Activated T-helper 1 cell treated with anti-CD3 and anti-CD28 coated beads, Interleukin-12 subunit alpha, Interleukin-12 subunit beta, Interleukin-2, Interleukin-4 antibody, amounts not matched to agents 30 ng/mL and 10 ng/mL and 1 ng/mL, durations not matched to agents 14 hours and 24 hours and 36 hours (primary cell): ENCODE measurements at regions of chr1 and their contacts with region 1.

Region 1: DNA sequence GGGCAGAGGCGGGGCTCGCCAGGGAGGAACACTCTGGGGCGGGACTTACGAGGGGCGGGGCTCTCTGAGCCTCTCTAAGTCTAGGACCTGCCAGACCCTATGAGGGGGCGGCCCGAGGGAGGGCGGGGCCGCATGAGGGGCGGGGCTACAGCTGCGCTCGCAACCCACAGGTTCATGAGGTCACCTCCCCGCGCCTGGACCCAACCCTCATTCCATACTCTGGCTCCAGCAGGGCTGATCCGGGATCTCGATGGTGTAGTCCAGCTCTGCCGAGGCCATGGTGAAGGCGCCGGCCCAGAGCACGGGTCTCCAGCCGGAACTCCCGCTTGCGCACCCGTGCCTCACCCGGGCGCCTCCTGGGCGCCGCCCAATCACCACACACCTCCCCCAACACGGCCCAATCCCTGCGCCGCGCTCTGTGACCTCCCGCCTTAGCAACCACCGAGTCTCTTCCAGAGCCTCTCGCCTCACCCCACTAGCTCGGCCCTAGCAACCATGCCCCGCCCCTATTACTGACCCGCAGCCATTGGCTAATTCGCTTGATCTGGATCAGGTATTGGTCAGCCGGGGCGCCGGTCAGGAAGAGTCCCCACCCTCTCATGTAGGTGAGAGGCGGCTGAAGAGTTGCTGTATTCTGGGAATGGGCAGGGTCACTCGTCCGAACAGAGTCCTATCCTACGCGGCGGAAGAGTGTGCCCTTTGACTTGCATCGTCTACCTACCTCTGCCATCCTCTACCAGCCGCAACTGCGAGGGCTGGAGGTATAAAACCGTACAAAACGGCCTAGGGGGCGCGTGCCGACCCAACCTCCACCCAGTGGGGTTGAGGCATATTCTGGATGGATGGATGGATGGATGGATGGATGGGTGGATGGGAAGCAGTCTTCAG is at the starts of genes ARMH1 and TMEM53:
- DNase-seq: peak; percentile 98
- H3K4me3 Mint-ChIP-seq: peak within 1 kb of the TSS; percentile 80
- H3K27ac Mint-ChIP-seq: peak within 1 kb of the TSS; percentile 79
- H3K4me1 Mint-ChIP-seq: peaks cover 30% of the 10 kb centered on the region
- H3K27me3 Mint-ChIP-seq: no peaks in the 10 kb centered on the region
- total RNA-seq, gene ARMH1: 95.3 and 99.8 TPM in 2 replicates
- total RNA-seq, gene TMEM53: 4.3 and 6.6 TPM in 2 replicates

Region 2: GRCh38 chr1:44029906-44030604 is 644.3 kb before region 1 on chr1:
- intact Hi-C with region 1: loop called (anchors 1 kb)
- DNase-seq: peak; percentile 86
- H3K4me3 Mint-ChIP-seq: peak overlapping the region; percentile 90
- H3K27ac Mint-ChIP-seq: peak overlapping the region; percentile 92
- H3K4me1 Mint-ChIP-seq: peaks cover 30% of the 10 kb centered on the region
- H3K27me3 Mint-ChIP-seq: peaks cover 2% of the 10 kb centered on the region

Region 3: DNA sequence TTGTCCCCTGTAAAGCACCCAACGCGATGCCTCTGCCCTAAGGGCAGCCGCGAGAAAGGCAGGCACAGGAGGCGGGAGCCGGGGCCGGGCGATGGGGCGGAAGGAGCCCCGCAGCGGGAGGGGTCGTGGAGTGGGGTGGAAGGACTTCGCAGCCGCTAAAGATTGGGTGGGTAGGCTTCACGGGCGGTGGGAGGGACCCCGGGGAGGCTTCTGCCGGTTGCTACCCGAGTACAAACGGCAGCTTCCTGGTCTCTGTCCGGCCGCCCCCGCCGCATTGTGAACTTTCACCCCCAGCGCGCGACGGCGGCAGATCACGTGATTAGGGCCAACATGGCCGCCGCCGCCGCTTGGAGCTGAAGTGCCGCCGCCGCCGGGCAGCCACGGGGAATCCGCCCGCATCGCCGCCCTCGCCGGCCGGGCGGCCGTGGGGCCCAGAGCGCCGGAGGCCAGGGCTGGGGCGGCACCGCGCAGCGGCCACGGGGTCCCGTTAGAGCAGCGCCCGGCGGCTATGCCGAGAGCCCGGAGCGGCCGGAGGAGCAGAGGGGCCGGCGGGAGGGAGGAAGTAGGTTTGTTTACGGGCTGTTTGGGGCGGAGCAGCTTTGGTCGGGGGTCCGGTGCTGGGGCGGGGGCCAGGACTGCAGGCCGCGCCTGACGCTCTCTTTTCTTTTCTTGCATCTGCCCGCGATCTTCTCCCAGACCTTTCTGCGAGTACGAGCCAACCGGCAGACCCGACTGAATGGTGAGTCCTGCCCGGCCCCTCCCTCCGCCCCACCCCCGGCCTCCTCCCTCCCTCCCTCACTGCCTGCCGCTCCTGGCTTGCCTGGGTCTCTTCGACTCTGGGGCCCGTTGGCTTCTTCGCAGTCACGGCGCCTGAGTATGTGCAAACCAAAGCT is 42.5 kb before region 1 on chr1:
- intact Hi-C with region 1: loop called (anchors 1 kb)
- DNase-seq: peak; percentile 86
- H3K4me3 Mint-ChIP-seq: peak overlapping the region; percentile 91
- H3K27ac Mint-ChIP-seq: peak overlapping the region; percentile 97
- H3K4me1 Mint-ChIP-seq: peaks cover 40% of the 10 kb centered on the region
- H3K27me3 Mint-ChIP-seq: peaks cover 2% of the 10 kb centered on the region

Region 4: GRCh38 chr1:44721485-44722361 is 47.4 kb after region 1 on chr1:
- intact Hi-C with region 1: loop called (anchors 2 kb)
- DNase-seq: peak; percentile 75
- H3K4me3 Mint-ChIP-seq: peak overlapping the region; percentile 77
- H3K27ac Mint-ChIP-seq: peak overlapping the region; percentile 97
- H3K4me1 Mint-ChIP-seq: peaks cover 71% of the 10 kb centered on the region
- H3K27me3 Mint-ChIP-seq: no peaks in the 10 kb centered on the region

Region 5: DNA sequence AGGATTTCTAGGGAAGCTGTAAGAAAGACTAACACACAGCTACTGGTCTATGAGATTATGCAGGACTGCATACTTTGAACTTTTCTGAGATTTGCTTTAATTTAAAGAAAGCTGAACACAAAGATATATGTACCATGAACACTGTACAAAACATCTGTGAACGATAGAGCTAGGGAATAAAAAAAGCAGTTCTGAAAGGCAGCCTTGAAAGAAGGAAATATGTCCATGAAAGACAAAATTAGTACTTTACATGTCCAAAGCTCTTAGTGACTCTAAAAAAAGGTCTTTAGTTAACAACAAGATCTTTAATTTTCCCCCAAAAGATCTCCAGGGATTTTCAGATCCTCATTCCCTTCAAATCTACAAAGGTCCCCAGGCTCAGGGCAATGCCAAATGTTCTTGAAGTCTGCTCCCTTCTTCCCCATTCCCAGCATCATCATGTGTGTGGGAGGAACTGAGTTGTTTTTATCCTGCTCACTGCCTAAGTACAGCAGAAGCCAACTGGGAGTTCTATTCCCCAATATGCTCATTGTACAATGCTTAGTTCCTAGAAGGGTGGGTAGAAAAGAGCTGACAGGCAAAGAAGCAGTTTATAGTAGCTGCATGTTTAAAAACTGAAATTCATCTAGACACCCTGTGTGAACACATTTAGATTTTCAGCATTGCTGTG is 228.8 kb after region 1 on chr1:
- intact Hi-C with region 1: no loop called
- DNase-seq: no peak
- H3K4me3 Mint-ChIP-seq: no peak overlapping the region
- H3K27ac Mint-ChIP-seq: no peak overlapping the region
- H3K4me1 Mint-ChIP-seq: no peaks in the 10 kb centered on the region
- H3K27me3 Mint-ChIP-seq: no peaks in the 10 kb centered on the region

Region 6: GRCh38 chr1:44985747-44986359 is 311.5 kb after region 1 on chr1:
- intact Hi-C with region 1: loop called (anchors 1 kb)
- DNase-seq: no peak
- H3K4me3 Mint-ChIP-seq: peak overlapping the region; percentile 100
- H3K27ac Mint-ChIP-seq: peak overlapping the region; percentile 94
- H3K4me1 Mint-ChIP-seq: peaks cover 21% of the 10 kb centered on the region
- H3K27me3 Mint-ChIP-seq: peaks cover 2% of the 10 kb centered on the region